CD4-positive, alpha-beta T cell (primary cell): ENCODE measurements at regions of chr10 and their contacts with region 1.

Region 1: GRCh38 chr10:79195091-79195923 is 126.5 kb downstream of the ZMIZ1 start:
- DNase-seq: peak; percentile 61 to 87 (median 72)
- ATAC-seq: peak; percentile 91
- H3K4me3 ChIP-seq: no peak overlapping the region
- H3K4me3 Mint-ChIP-seq: no peak overlapping the region
- H3K27ac ChIP-seq: no peak overlapping the region
- H3K27ac Mint-ChIP-seq: no peak overlapping the region
- H3K4me1 ChIP-seq: peaks cover 10% of the 10 kb centered on the region
- H3K4me1 Mint-ChIP-seq: no peaks in the 10 kb centered on the region
- H3K27me3 ChIP-seq: no peaks in the 10 kb centered on the region
- H3K27me3 Mint-ChIP-seq: no peaks in the 10 kb centered on the region
- CTCF ChIP-seq: peak; percentile 97

Region 2: GRCh38 chr10:77846718-77847630 is 1348.3 kb before region 1 on chr10:
- CTCF ChIA-PET with region 1: no interaction called
- POLR2A ChIA-PET with region 1: no interaction called
- intact Hi-C with region 1: loop called (anchors 2 to 5 kb)
- DNase-seq: peak; percentile 31 to 75 (median 48)
- ATAC-seq: peak; percentile 89
- H3K4me3 ChIP-seq: no peak overlapping the region
- H3K4me3 Mint-ChIP-seq: no peak overlapping the region
- H3K27ac ChIP-seq: no peak overlapping the region
- H3K27ac Mint-ChIP-seq: no peak overlapping the region
- H3K4me1 ChIP-seq: peaks cover 4% of the 10 kb centered on the region
- H3K4me1 Mint-ChIP-seq: no peaks in the 10 kb centered on the region
- H3K27me3 ChIP-seq: no peaks in the 10 kb centered on the region
- H3K27me3 Mint-ChIP-seq: no peaks in the 10 kb centered on the region
- CTCF ChIP-seq: peak; percentile 78

Region 3: DNA sequence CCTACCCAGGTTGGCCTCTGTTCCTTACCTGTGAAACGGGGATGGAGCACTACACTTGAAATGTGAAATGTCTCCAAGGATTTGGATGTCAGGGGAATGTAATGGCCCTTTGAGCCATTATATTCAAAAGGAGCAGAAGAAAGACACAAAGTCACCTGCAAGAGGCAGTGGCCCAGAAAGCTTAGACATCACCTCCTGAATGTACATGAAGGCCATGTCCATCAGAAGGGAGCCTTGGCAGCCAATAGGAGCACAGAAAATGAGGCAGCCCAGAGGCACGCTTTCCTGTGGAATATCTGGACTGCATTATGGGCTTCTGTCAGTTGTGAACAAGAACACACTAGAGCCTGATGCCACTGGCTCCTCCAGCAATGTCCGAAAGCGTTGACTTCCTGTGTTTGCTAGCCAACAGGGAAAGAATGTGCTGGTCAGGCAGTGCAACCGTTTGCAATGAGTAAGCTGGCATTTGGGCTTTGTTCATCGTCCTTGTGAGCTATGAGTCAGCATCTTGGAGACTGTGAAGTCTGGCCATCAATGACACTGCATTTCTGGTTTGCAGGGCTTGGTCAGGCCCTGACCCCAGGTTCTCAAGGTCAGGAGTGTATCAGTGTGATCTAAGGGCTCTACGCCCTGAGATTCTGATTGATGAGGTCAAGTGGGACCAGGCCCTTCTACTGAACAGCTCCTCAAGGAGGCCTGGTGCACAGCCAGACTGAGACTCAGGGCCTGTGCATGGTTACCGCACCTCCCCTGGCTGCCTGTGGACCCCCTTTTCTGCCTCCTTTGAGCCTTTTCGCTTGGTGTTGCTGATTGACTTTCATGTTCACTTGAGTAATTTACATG is 939.3 kb before region 1 on chr10:
- CTCF ChIA-PET with region 1: no interaction called
- POLR2A ChIA-PET with region 1: no interaction called
- intact Hi-C with region 1: loop called (anchors 5 kb)
- DNase-seq: peak in 2 of 14 experiments; percentile 45 to 63
- ATAC-seq: no peak
- H3K4me3 ChIP-seq: no peak overlapping the region
- H3K4me3 Mint-ChIP-seq: no peak overlapping the region
- H3K27ac ChIP-seq: no peak overlapping the region
- H3K27ac Mint-ChIP-seq: no peak overlapping the region
- H3K4me1 ChIP-seq: no peaks in the 10 kb centered on the region
- H3K4me1 Mint-ChIP-seq: no peaks in the 10 kb centered on the region
- H3K27me3 ChIP-seq: no peaks in the 10 kb centered on the region
- H3K27me3 Mint-ChIP-seq: no peaks in the 10 kb centered on the region
- CTCF ChIP-seq: no peak

Region 4: GRCh38 chr10:78510566-78511323 is 684.6 kb before region 1 on chr10:
- CTCF ChIA-PET with region 1: no interaction called
- POLR2A ChIA-PET with region 1: no interaction called
- intact Hi-C with region 1: loop called in 1 of 2 experiments (anchors 10 kb)
- DNase-seq: no peak
- ATAC-seq: no peak
- H3K4me3 ChIP-seq: no peak overlapping the region
- H3K4me3 Mint-ChIP-seq: no peak overlapping the region
- H3K27ac ChIP-seq: no peak overlapping the region
- H3K27ac Mint-ChIP-seq: no peak overlapping the region
- H3K4me1 ChIP-seq: no peaks in the 10 kb centered on the region
- H3K4me1 Mint-ChIP-seq: no peaks in the 10 kb centered on the region
- H3K27me3 ChIP-seq: no peaks in the 10 kb centered on the region
- H3K27me3 Mint-ChIP-seq: no peaks in the 10 kb centered on the region
- CTCF ChIP-seq: no peak

Region 5: DNA sequence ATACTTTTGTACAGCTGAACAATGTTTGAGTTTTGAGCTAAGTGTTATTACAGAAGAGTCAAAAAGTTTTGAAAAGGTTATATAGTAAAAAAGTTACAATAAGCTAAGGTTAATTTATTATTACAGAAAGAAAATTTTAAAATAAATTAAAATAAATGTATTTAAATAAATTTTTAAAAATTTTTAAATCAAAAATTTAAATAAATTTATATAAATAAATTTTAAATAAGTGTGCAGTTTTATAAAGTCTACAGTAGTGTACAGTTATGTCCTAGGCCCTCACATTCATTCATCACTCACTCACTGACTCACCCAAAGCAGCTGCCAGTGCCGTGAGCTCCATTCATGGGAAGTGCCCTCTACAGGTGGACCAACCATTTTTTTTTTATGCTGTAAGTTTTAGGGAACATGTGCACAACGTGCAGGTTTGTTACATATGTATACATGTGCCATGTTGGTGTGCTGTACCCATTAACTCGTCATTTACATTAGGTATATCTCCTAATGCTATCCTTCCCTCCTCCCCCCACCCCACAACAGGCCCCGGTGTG is 589.4 kb before region 1 on chr10:
- CTCF ChIA-PET with region 1: no interaction called
- POLR2A ChIA-PET with region 1: no interaction called
- intact Hi-C with region 1: loop called in 1 of 2 experiments (anchors 10 kb)
- DNase-seq: no peak
- ATAC-seq: no peak
- H3K4me3 ChIP-seq: no peak overlapping the region
- H3K4me3 Mint-ChIP-seq: no peak overlapping the region
- H3K27ac ChIP-seq: no peak overlapping the region
- H3K27ac Mint-ChIP-seq: no peak overlapping the region
- H3K4me1 ChIP-seq: no peaks in the 10 kb centered on the region
- H3K4me1 Mint-ChIP-seq: no peaks in the 10 kb centered on the region
- H3K27me3 ChIP-seq: peaks cover 0 to 9% of the 10 kb centered on the region in 2 experiments
- H3K27me3 Mint-ChIP-seq: peaks cover 17% of the 10 kb centered on the region
- CTCF ChIP-seq: no peak

Region 6: DNA sequence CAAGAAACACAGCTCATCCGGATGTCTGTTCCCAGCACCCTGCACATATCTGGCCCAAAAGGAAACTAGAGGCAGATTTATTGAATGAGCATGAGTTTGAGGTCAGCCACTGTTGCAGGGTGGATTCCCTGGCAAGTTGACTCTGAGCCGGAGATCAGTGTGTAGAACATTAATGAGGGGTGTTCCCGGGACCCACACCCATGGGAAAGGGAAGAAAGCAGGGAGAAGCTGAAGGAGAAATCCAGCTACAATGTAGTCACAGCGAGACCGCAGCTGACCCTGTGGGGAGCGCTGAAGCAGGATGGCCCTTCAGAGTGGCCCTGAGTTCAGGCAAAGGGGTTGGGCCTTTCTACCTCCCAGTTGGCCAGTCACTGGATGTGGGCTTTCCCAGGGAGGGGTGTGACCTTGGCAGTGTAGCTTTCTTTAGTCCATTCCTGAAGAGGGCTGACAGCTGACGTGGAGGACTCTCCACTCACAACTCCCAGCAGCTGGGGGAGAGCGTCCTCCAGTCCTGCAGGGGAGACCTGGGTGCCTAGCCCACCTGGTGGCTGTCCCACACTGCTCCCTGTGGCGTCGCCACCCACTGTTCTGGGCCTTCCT is 450.7 kb before region 1 on chr10:
- CTCF ChIA-PET with region 1: no interaction called
- POLR2A ChIA-PET with region 1: no interaction called
- intact Hi-C with region 1: loop called in 1 of 2 experiments (anchors 5 kb)
- DNase-seq: no peak
- ATAC-seq: no peak
- H3K4me3 ChIP-seq: no peak overlapping the region
- H3K4me3 Mint-ChIP-seq: no peak overlapping the region
- H3K27ac ChIP-seq: no peak overlapping the region
- H3K27ac Mint-ChIP-seq: no peak overlapping the region
- H3K4me1 ChIP-seq: peaks cover 5% of the 10 kb centered on the region
- H3K4me1 Mint-ChIP-seq: peaks cover 16% of the 10 kb centered on the region
- H3K27me3 ChIP-seq: no peaks in the 10 kb centered on the region
- H3K27me3 Mint-ChIP-seq: no peaks in the 10 kb centered on the region
- CTCF ChIP-seq: no peak

Region 7: GRCh38 chr10:78931321-78932053 is 263.8 kb before region 1 on chr10:
- CTCF ChIA-PET with region 1: no interaction called
- POLR2A ChIA-PET with region 1: no interaction called
- intact Hi-C with region 1: loop called in 1 of 2 experiments (anchors 2 kb)
- DNase-seq: no peak
- ATAC-seq: no peak
- H3K4me3 ChIP-seq: no peak overlapping the region
- H3K4me3 Mint-ChIP-seq: no peak overlapping the region
- H3K27ac ChIP-seq: no peak overlapping the region
- H3K27ac Mint-ChIP-seq: no peak overlapping the region
- H3K4me1 ChIP-seq: no peaks in the 10 kb centered on the region
- H3K4me1 Mint-ChIP-seq: no peaks in the 10 kb centered on the region
- H3K27me3 ChIP-seq: no peaks in the 10 kb centered on the region
- H3K27me3 Mint-ChIP-seq: no peaks in the 10 kb centered on the region
- CTCF ChIP-seq: no peak